ENCODE measurements at regions of chr7 and their contacts with region 1.

Region 1: GRCh38 chr7:28408960-28409715 is 3.2 kb upstream of the CREB5 start:
- DNase-seq: peak; percentile 94
- ATAC-seq: peak; percentile 87

Region 2: DNA sequence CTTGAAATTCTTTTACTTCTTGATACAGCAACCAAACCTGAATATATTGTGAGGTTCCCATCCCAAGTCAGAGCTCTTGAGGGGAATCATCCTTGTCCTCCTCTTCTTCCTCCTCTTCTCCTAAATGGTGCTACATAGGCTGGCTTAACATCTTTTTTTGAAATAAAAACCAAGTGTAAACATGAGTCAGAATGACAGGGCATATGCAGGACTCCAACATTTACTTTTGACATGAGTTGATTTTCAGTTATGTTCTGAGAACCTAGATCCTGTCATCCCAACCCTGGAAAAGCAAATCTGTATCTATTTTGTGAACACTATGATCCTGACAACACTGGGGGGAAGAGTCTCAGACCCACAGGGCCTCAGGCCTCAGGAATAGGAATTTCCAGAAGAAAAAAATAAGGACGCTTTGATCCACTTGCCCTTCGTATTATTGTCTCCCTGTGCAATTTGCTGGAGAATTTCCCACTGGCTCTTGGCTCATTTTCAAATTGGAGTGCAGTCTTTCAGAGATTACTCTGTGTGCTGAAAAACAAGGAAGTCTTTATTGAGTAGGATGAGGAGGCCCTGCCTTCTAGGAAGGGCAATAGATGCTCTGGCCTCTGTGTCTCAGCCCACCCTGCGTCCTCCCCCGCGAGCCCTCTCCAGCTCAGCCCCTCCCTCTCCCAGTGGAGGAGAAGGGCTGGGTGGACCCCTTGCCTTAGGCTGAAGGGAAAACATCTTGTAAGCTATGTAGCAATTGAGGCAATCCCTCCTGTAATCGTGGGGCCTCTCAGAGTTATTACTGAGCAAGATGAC is 124.8 kb after region 1 on chr7:
- intact Hi-C with region 1: loop called (anchors 5 kb)
- DNase-seq: peak; percentile 75
- ATAC-seq: peak; percentile 88

Region 3: GRCh38 chr7:28685644-28686417 is 276.7 kb after region 1 on chr7:
- intact Hi-C with region 1: loop called (anchors 5 kb)
- DNase-seq: peak; percentile 92
- ATAC-seq: peak; percentile 94